BJ (cell line): ENCODE measurements at regions of chr1 and their contacts with region 1.

Region 1: GRCh38 chr1:164480285-164480907 is 78.6 kb upstream of the PBX1 start:
- DNase-seq: no peak
- H3K4me3 ChIP-seq: no peak overlapping the region
- H3K27me3 ChIP-seq: no peaks in the 10 kb centered on the region
- CTCF ChIP-seq: no peak

Region 2: DNA sequence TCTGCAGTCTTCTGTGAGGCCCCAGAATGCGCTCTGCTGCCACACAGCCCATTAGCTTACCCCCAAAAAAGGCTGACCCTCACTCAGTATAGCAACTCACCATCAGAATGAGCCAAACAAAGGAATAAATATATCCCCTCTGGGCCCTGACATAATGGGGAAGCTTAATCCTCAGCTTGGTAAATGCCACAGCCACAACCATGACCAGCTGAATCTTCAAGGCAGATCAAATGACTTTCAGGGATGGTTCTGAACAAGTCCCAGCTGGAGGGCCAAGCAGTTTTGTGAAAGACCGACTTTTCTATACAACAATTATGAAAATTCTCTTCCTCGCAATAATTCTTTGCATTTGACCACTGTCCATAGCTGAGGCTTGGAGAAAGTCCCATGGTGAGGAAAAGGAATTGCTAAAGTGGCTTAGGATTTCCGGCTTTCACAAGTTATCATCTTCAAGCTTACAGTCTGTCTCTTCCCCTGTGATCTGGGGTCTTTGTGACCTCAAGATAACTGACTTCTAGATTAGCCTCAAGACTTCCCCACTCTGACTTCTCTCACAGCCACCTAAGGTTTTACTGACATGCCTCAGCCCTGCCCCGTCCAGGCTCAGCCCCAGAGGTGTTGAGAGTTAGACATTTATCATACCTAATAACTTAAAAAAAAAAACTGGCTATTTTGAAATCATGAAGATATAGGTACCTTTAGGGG is 30.8 kb after region 1 on chr1:
- CTCF ChIA-PET with region 1: no interaction called
- POLR2A ChIA-PET with region 1: interaction called, 12 read pairs
- DNase-seq: no peak
- H3K4me3 ChIP-seq: no peak overlapping the region
- H3K27me3 ChIP-seq: peaks cover 3% of the 10 kb centered on the region
- CTCF ChIP-seq: no peak